WTC11 (cell line): ENCODE measurements at regions of chr1 and their contacts with region 1.

Region 1: DNA sequence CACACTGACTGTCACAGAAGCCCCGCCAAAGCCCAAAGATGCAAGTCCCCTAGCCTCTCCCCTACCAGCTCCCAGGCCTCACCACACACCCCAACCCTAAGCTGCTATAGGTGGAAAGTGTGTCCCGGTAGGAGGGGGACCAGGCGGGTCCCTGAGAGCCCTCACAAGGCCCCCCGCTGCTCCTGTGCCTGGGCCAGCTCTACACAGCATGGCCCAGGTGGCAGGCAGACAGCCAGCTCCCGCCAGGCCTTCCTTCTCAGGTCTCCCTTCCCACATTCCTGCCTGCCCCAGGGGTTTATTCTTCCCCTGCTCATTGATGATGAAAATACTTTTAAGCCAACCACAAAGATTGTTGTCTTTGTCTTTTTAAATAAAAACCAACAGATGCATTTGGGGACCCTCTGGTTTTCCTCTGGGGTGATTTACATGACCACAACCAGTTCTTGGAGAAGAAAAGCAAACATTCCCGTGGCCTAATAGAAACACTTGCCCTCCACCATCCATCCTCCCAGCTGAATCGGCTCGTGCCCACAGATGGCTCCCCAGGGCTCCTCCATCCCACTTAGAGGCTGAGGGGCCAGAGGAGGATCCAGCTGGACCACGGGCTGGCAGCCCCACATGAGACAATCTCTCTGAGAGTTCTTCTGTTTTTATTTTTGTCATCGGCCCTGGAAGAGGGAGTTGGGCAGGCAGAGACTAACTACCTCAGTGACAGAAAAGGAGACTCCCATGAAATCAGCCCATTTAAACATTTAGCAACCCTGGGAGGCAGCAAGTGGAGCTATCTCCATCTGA is 93.1 kb downstream of the DMRTB1 start:
- DNase-seq: peak; percentile 25
- ATAC-seq: peak; percentile 76
- H3K4me3 Mint-ChIP-seq: no peak overlapping the region
- H3K27ac Mint-ChIP-seq: no peak overlapping the region
- H3K4me1 Mint-ChIP-seq: peaks cover 14% of the 10 kb centered on the region
- H3K27me3 Mint-ChIP-seq: peaks cover 2% of the 10 kb centered on the region; the same call in 1 of the 2 replicates
- CTCF ChIP-seq: no peak

Region 2: DNA sequence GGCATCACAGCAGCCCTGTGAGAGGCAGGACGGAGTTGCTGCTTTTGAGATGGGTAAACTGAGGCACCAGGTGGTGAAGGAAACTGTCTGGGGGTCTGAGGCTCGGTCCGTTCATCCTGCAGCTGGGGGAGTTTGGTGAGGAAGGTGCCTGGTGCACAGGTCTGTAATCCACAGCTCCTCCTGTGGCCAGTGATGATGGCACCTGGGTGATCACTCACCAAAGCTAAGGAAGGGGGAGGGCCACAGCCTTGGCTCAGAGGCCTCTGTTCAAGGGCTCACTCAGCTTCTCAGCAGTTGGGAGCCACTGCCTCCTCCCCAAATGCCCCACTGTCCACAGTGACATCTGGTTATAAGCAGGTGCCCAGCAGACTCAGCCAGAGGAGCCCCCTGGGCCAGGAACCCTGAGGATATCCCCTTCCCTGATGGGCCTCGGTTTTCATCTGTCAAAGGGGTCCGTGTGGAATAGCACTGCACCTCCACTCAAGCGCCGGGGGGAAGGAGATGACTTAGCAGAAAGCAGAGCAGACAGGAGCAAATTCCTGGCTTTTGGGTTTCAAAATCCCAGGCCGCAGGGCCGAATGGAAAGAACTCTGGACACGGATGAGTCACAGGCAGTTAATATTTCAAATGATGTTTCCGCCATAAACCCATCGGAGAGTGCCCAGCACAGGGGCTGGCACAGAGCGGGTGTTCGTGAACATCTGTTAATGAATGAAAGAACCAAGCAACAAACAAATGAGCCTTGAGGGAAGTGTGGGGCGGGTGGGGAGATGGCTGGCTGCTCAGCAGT is 10.4 kb before region 1 on chr1:
- CTCF ChIA-PET with region 1: interaction called, 20 read pairs
- POLR2A ChIA-PET with region 1: no interaction called
- DNase-seq: peak; percentile 62
- ATAC-seq: peak; percentile 86
- H3K4me3 Mint-ChIP-seq: no peak overlapping the region
- H3K27ac Mint-ChIP-seq: no peak overlapping the region
- H3K4me1 Mint-ChIP-seq: no peaks in the 10 kb centered on the region; the same call in 1 of the 2 replicates
- H3K27me3 Mint-ChIP-seq: no peaks in the 10 kb centered on the region
- CTCF ChIP-seq: no peak